Activated CD4-positive, alpha-beta T cell treated with anti-CD3 and anti-CD28 coated beads, Interleukin-2, amount 10 ng/mL, durations not matched to agents 24 days and 14 days (primary cell): ENCODE measurements at regions of chr7 and their contacts with region 1.

Region 1: GRCh38 chr7:6323967-6324701 is 51.7 kb upstream of the CYTH3 start:
- DNase-seq: no peak
- H3K4me3 Mint-ChIP-seq: no peak overlapping the region
- H3K27ac Mint-ChIP-seq: no peak overlapping the region
- H3K4me1 Mint-ChIP-seq: peaks cover 4% of the 10 kb centered on the region
- H3K27me3 Mint-ChIP-seq: peaks cover 1% of the 10 kb centered on the region

Region 2: DNA sequence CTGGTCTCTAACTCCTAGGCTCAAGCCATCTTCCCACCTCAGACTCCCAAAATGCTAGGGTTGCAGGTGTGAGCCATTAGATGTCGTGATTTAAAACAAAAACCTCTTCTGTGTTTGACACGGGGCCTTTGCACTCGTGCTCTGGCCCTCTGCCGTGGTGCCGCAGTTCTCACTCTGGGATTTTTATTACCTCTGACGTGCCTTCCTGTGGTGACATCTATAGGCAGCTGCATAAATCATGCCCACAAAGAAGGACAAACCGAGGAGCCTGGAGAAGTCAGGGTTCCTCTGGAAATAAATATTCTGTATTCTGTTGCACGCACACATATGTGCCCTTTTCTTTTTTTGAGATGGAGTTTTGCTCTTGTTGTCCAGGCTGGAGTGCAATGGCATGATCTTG is 469.4 kb before region 1 on chr7:
- intact Hi-C with region 1: loop called (anchors 1 kb)
- DNase-seq: no peak
- H3K4me3 Mint-ChIP-seq: no peak overlapping the region
- H3K27ac Mint-ChIP-seq: no peak overlapping the region
- H3K4me1 Mint-ChIP-seq: peaks cover 5% of the 10 kb centered on the region
- H3K27me3 Mint-ChIP-seq: no peaks in the 10 kb centered on the region

Region 3: DNA sequence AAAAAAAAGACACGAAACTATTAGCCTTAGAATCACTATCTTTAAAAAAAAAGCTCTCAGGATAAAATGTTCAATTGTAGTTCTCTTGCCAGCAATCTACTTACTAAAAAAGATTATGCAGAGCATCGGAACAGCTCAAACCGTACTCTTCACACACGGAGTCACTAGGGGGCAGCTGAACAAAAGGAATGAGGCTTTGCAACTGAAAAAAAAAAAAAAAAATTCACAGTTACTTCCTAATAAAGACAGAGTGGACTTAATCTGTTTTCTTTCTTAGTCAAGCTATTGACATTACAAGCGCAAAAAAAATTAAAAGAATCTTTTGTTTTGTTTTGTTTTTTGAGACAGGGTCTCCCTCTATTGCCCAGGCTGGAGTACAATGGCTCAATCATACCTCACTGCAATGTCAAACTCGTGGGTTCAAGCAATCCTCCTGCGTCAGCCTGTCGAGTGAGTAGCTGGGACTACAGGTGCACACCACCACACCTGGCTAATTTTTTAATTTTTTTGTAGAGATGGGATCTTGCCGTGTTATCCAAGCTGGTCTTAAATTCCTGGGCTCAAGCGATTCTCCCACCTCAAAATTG is 326.8 kb before region 1 on chr7:
- intact Hi-C with region 1: loop called (anchors 1 kb)
- DNase-seq: peak; percentile 81
- H3K4me3 Mint-ChIP-seq: no peak overlapping the region
- H3K27ac Mint-ChIP-seq: no peak overlapping the region
- H3K4me1 Mint-ChIP-seq: peaks cover 2% of the 10 kb centered on the region
- H3K27me3 Mint-ChIP-seq: no peaks in the 10 kb centered on the region

Region 4: DNA sequence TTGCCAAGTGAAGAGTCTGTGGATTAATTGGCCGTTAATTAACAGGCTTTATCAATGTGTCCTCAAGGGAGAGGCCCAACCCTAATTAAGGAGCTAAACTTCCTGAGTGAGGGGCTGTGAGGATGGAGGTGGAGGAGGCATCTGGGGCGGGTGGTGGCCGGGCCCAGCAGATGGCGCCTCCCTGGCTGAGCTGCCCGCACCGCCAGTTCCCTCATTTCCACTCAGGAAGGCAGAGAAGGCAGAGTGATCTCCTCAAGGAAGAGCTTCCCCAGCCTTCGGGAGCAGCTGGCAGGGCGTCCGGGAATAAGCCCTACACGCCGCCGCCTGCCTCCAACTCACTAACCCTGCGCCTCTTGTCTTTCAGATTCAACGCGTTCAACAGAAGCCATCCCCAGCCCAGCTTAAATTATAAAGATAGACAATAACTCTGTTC is 163.9 kb before region 1 on chr7:
- intact Hi-C with region 1: loop called (anchors 10 kb)
- DNase-seq: no peak
- H3K4me3 Mint-ChIP-seq: no peak overlapping the region
- H3K27ac Mint-ChIP-seq: no peak overlapping the region
- H3K4me1 Mint-ChIP-seq: peaks cover 4% of the 10 kb centered on the region
- H3K27me3 Mint-ChIP-seq: no peaks in the 10 kb centered on the region

Region 5: DNA sequence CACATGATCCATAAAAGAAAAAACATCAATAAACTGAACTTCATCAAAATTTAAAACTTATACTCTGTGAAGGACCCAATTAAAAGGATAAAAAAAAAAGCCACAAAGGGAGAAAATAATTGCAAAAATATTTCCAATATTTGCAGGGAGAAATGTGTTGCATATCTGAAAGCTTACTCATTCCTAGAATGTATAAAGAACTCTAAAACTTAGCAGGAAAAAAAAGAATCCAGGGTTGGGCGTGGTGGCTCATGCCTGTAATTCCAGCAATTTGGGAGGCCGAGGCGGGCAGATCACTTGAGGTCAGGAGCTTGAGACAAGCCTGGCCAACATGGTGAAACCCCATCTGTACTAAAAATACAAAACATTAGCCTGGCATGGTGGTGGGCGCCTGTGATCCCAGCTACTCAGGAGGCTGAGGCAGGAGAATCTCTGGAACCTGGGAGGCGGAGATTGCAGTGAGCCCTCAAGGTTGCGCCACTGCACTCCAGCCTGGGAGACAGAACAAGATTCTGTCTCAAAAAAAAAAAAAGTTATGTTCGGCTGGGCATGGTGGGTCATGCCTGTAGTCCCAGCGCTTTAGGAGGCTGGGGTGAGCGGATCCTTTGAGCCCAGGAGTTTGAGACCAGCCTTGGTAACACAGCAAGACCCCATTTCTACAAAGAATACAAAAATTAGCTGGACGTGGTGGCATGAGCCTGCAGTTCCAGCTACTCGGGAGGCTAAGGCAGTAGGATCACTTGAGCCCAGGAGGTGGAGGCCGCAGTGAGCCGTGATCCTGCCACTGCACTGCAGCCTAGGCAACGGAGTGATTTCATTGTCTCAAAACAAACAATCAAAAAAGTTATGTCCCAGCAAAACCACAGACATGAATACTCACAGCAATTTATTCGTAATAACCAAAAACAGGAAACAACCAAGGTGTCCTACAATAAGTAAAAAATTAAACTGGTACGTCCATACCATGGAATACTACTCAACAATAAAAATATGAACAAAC is 40.4 kb before region 1 on chr7:
- intact Hi-C with region 1: no loop called
- DNase-seq: no peak
- H3K4me3 Mint-ChIP-seq: no peak overlapping the region
- H3K27ac Mint-ChIP-seq: no peak overlapping the region
- H3K4me1 Mint-ChIP-seq: no peaks in the 10 kb centered on the region
- H3K27me3 Mint-ChIP-seq: peaks cover 4% of the 10 kb centered on the region